Cardiac septum (tissue), 1 donor: ENCODE measurements at regions of chr1 and their contacts with region 1.

Region 1: GRCh38 chr1:29033829-29034466 is 89.8 kb downstream of the TMEM200B start:
- DNase-seq: no peak

Region 2: GRCh38 chr1:28789412-28789811 is 244.5 kb before region 1 on chr1:
- intact Hi-C with region 1: loop called (anchors 5 kb)
- DNase-seq: no peak

Region 3: GRCh38 chr1:29478151-29478791 is 444.3 kb after region 1 on chr1:
- intact Hi-C with region 1: no loop called
- DNase-seq: peak; percentile 29